WTC11 (cell line): ENCODE measurements at regions of chr22 and their contacts with region 1.

Region 1: DNA sequence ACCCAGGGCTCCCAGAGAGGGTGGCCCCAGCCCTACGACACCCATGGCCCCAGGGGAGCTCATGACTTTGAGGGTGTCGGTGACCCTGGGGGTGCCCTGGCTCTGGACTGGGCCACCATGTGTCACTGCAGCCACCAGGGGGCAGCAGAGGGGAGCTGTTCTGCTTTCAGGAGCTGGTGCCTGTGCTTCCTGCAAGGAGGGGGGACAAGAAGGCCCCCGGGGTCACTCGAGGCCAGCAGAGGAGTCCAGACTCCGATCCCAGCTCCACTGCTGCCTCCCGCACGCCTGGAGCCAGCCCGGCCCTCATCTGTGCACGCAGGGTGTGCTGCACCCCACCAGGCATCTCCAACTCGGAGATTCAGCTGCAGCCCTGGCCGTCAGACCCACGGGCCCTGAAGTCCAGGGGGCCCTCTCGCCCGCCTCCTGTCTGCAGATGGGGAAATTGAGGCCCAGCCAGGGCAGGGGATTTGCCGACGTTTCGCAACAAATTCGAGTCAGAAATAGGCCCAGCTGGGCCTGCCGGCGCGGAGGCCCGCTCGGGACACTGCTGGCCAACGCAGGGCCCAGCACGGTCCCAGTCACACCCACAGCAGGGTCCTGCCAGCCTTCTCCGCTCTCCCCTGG is 29.5 kb upstream of the WNT7B start:
- DNase-seq: peak; percentile 92
- ATAC-seq: peak; percentile 84
- H3K4me3 Mint-ChIP-seq: no peak overlapping the region
- H3K27ac Mint-ChIP-seq: peak overlapping the region; percentile 45
- H3K4me1 Mint-ChIP-seq: no peaks in the 10 kb centered on the region; the same call in 1 of the 2 replicates
- H3K27me3 Mint-ChIP-seq: no peaks in the 10 kb centered on the region
- CTCF ChIP-seq: peak; percentile 89

Region 2: DNA sequence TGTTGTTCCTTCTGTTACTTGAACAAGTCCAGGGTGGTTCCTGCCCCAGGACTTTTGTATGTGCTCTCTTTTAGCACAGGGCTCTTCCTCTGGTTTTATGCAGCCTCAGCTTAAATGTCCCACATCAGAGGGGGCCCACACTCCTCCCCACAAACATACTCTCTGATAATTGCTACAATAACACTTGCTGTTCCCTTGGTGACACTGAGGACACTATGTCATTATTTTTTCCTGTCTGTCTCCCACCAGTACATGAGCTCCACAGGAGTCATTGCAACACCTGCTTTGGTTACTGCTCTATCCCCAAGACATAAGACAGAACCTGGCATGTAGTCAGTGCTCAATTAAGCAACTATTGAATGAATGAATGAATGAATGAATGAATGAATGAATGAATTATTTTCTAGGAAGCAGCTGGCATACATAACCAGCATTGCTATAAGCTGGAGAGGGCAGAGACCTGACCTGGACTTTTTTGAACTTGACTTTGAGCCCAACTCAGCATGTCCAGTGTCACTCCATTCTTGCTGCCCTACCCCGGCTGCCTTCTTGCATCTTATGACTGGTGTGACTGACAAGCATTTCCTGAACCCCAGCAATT is 22.1 kb before region 1 on chr22:
- CTCF ChIA-PET with region 1: interaction called, 18 read pairs
- POLR2A ChIA-PET with region 1: no interaction called
- DNase-seq: no peak
- ATAC-seq: no peak
- H3K4me3 Mint-ChIP-seq: no peak overlapping the region
- H3K27ac Mint-ChIP-seq: no peak overlapping the region
- H3K4me1 Mint-ChIP-seq: no peaks in the 10 kb centered on the region
- H3K27me3 Mint-ChIP-seq: peaks cover 6% of the 10 kb centered on the region
- CTCF ChIP-seq: no peak

Region 3: GRCh38 chr22:46035742-46036557 is 29.5 kb after region 1 on chr22:
- CTCF ChIA-PET with region 1: interaction called, 127 read pairs
- POLR2A ChIA-PET with region 1: interaction called, 6 read pairs
- DNase-seq: peak; percentile 100
- ATAC-seq: peak; percentile 95
- H3K4me3 Mint-ChIP-seq: peak overlapping the region; percentile 73
- H3K27ac Mint-ChIP-seq: no peak overlapping the region
- H3K4me1 Mint-ChIP-seq: peaks cover 34% of the 10 kb centered on the region
- H3K27me3 Mint-ChIP-seq: no peaks in the 10 kb centered on the region
- CTCF ChIP-seq: no peak

Region 4: GRCh38 chr22:46071451-46072109 is 65.1 kb after region 1 on chr22:
- CTCF ChIA-PET with region 1: interaction called, 28 read pairs
- POLR2A ChIA-PET with region 1: no interaction called
- DNase-seq: peak; percentile 38
- ATAC-seq: peak; percentile 3; the same call in 1 of the 2 replicates
- H3K4me3 Mint-ChIP-seq: peak overlapping the region; percentile 67
- H3K27ac Mint-ChIP-seq: no peak overlapping the region
- H3K4me1 Mint-ChIP-seq: peaks cover 28% of the 10 kb centered on the region
- H3K27me3 Mint-ChIP-seq: peaks cover 67% of the 10 kb centered on the region
- CTCF ChIP-seq: no peak

Region 5: GRCh38 chr22:46108564-46109473 is 102.3 kb after region 1 on chr22:
- CTCF ChIA-PET with region 1: interaction called, 179 read pairs
- POLR2A ChIA-PET with region 1: no interaction called
- DNase-seq: no peak
- ATAC-seq: peak; percentile 48
- H3K4me3 Mint-ChIP-seq: no peak overlapping the region
- H3K27ac Mint-ChIP-seq: 0 out of 2 replicates have a peak overlapping the region, but pooled peaks have one; percentile 8
- H3K4me1 Mint-ChIP-seq: peaks cover 3% of the 10 kb centered on the region; the same call in 1 of the 2 replicates
- H3K27me3 Mint-ChIP-seq: no peaks in the 10 kb centered on the region
- CTCF ChIP-seq: no peak

Region 6: DNA sequence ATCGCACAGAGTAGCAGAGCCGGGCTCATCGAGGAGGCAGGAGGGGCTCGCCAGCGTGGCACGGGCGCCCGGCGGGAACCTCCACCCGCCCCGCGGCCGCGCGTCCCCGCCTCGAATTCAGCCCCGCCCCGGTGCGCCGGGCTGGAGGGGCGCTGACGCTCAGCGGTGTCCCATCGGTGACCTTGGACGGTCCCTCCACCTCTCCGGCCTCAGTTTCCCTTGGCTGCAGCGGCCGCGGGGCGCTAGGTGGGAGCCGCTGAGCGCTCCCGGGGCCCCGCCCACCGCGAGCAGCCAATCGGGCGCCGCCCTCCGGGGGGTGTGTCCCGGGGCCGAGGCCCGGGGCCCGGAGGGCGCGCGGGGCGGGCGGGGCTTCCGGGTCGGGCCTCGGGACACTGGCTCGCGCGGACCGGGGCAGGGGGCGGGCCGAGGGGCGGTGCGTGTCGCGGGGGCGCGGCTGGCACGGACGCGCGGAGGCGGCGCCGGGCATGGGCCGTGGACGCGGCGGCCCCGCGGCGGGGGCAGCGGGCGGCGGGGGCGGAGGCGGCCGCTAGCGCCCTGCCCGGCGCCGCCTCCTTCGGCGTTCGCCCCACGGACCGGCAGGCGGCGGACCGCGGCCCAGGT is 143.7 kb after region 1 on chr22 and contains the start of gene PPARA:
- CTCF ChIA-PET with region 1: interaction called, 12 read pairs
- POLR2A ChIA-PET with region 1: no interaction called
- DNase-seq: peak; percentile 64
- ATAC-seq: peak; percentile 61
- H3K4me3 Mint-ChIP-seq: peak within 1 kb of the TSS; percentile 77
- H3K27ac Mint-ChIP-seq: no peak within 1 kb of the TSS
- H3K4me1 Mint-ChIP-seq: peaks cover 9% of the 10 kb centered on the region
- H3K27me3 Mint-ChIP-seq: peaks cover 50% of the 10 kb centered on the region
- CTCF ChIP-seq: no peak
- total RNA-seq, gene PPARA: 8.5 to 10.1 TPM (median 9.3 TPM) in 3 replicates